Psoas muscle (tissue), 8 donors: ENCODE measurements at regions of chr3 and their contacts with region 1.

Region 1: GRCh38 chr3:12868039-12869034 is 27.0 kb upstream of the RPL32 start:
- DNase-seq: peak; percentile 85 to 92
- ATAC-seq: peak; percentile 86 to 87 (median 86)
- H3K4me3 ChIP-seq: no peak overlapping the region
- H3K27ac ChIP-seq: no peak overlapping the region
- H3K4me1 ChIP-seq: no peaks in the 10 kb centered on the region
- H3K27me3 ChIP-seq: no peaks in the 10 kb centered on the region
- CTCF ChIP-seq: peak; percentile 72

Region 2: GRCh38 chr3:12508291-12508700 is 360.0 kb before region 1 on chr3:
- intact Hi-C with region 1: no loop called
- DNase-seq: peak in 1 of 2 donors; percentile 21
- ATAC-seq: peak; percentile 30 to 93 (median 82)
- H3K4me3 ChIP-seq: no peak overlapping the region
- H3K27ac ChIP-seq: peak overlapping the region; percentile 38
- H3K4me1 ChIP-seq: peaks cover 10% of the 10 kb centered on the region
- H3K27me3 ChIP-seq: no peaks in the 10 kb centered on the region
- CTCF ChIP-seq: no peak

Region 3: GRCh38 chr3:12841149-12841970 is 27.0 kb before region 1 on chr3 and contains the start of gene RPL32:
- intact Hi-C with region 1: no loop called
- DNase-seq: peak; percentile 88 to 93
- ATAC-seq: peak; percentile 91 to 94 (median 92)
- H3K4me3 ChIP-seq: peak within 1 kb of the TSS; percentile 98
- H3K27ac ChIP-seq: peak within 1 kb of the TSS; percentile 85
- H3K4me1 ChIP-seq: peaks cover 42% of the 10 kb centered on the region
- H3K27me3 ChIP-seq: no peaks in the 10 kb centered on the region
- CTCF ChIP-seq: peak; percentile 79
- total RNA-seq, gene RPL32: 1,418 to 1,919 (median 1,477) TPM

Region 4: GRCh38 chr3:12886106-12886679 is 17.9 kb after region 1 on chr3:
- intact Hi-C with region 1: loop called in 1 of 2 experiments (anchors 2 kb)
- DNase-seq: peak in 1 of 2 donors; percentile 2
- ATAC-seq: peak in 3 of 4 donors; percentile 11 to 28 (median 21)
- H3K4me3 ChIP-seq: peak overlapping the region; percentile 48
- H3K27ac ChIP-seq: peak overlapping the region; percentile 44
- H3K4me1 ChIP-seq: peaks cover 33% of the 10 kb centered on the region
- H3K27me3 ChIP-seq: no peaks in the 10 kb centered on the region
- CTCF ChIP-seq: no peak

Region 5: DNA sequence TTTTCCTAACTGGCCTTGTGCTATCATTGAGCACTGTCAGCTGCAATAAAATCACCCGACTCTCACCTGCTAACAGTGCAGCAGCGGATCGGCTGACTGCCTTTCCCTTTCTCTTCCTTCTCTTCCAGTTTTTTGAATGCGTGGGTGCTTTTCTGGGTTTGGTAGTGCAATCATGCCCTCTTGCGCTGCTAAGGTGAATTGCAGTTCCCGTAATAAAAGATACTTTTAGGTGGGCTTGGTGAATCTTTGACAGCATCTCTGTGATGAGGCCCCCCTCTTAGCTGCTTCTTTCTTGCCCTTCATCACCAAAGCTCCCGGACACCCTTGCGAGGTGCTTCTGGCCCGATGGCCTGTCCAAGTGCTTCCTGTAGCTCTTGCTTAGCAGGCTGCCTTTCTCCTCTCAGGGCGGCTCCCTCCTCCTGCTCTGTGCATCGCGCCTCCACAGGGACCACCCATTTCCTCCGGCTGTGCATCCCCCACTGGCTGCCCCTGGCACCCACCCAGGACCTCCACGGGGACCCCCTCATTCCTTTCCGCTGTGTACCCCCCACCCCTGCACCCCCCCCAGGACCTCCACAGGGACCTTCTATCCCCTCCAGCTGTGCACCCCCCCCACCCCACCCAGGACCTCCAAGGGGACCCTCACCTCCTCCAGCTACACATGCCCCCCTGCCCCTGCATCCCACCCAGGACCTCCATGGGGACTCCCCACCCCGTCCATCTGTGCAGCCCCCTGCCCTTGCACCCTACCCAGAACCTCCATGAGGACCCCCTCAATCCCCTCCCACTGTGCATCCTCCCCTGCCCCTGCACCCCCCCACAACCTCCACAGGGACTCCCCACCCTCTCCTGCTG is 23.9 kb after region 1 on chr3:
- intact Hi-C with region 1: loop called (anchors 2 kb)
- DNase-seq: peak; percentile 18 to 54
- ATAC-seq: peak; percentile 39 to 73 (median 62)
- H3K4me3 ChIP-seq: peak overlapping the region; percentile 26
- H3K27ac ChIP-seq: peak overlapping the region; percentile 10
- H3K4me1 ChIP-seq: peaks cover 18% of the 10 kb centered on the region
- H3K27me3 ChIP-seq: no peaks in the 10 kb centered on the region
- CTCF ChIP-seq: peak; percentile 86

Region 6: DNA sequence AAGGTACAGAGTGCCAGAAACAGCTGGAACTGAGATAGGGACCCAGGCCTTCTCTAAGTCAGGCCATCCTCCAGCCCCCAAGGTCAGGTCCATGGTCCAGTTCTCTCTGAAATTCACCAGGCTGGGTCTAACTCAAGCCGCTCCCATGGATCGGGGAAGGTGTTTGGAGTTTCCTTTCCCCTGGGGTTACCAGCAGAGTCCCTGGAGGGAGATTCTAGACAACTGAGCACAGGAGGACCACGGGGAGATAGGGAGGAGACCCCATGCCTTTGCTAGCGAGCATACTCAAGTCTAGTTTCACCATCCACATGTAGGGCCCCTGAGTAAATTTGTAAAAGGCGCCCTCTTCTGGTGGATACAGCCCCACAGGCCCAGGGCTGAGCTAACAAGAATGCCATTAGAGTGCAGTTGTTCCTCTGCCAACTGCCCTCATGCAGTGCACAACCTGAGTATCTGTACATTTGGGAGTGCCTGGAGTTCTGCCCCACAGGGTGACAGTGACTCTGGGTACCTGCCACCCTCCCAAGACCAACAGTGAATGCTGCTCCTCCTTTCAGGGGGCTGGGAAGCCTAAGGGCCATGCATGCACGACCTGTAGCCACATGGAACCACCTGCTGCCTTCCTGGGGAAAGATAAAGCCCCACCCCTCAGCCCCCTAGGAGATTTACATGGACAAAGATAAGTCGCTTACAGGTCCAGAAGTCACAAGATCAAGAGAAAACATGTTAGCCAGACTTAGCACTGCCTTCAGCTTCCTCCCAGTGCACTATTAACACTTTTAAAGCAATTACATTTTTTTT is 115.9 kb after region 1 on chr3:
- intact Hi-C with region 1: loop called (anchors 2 to 5 kb)
- DNase-seq: peak; percentile 70 to 78
- ATAC-seq: peak; percentile 84 to 92 (median 86)
- H3K4me3 ChIP-seq: no peak overlapping the region
- H3K27ac ChIP-seq: peak overlapping the region; percentile 36
- H3K4me1 ChIP-seq: peaks cover 31% of the 10 kb centered on the region
- H3K27me3 ChIP-seq: no peaks in the 10 kb centered on the region
- CTCF ChIP-seq: peak; percentile 80

Region 7: DNA sequence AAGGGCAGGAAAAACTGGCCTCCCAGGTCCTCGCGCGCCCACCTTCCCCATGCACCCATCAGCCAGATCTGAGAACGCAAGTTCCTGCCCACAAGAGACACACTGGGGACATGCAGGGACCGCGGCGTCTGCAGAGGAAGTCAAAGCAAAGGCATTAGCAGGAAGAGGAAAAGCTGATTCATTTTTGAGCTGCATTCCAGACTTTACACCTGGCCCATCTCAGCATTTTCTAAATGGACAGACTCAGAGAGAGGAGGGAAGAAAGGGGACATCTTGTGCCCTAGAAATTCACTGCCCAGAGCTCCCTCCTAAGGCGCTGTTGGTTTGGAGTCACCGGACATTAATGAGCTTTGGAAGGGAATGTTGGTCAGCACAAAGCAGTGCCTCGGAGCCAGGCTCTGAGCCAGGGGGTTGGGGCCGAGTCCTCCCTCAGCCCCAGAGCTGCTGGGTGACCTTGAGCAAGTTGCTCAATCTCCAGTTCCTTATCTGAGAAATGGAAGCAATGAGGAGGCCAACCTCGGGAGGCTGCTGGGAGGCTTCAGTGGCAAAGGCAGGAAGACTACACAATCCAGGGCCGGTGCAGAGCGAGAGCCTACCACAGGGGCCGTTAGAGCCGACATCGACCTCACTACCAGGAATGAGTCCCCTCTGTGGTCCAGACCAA is 355.4 kb after region 1 on chr3:
- intact Hi-C with region 1: no loop called
- DNase-seq: no peak
- ATAC-seq: no peak
- H3K4me3 ChIP-seq: no peak overlapping the region
- H3K27ac ChIP-seq: no peak overlapping the region
- H3K4me1 ChIP-seq: no peaks in the 10 kb centered on the region
- H3K27me3 ChIP-seq: no peaks in the 10 kb centered on the region
- CTCF ChIP-seq: no peak

Region 8: DNA sequence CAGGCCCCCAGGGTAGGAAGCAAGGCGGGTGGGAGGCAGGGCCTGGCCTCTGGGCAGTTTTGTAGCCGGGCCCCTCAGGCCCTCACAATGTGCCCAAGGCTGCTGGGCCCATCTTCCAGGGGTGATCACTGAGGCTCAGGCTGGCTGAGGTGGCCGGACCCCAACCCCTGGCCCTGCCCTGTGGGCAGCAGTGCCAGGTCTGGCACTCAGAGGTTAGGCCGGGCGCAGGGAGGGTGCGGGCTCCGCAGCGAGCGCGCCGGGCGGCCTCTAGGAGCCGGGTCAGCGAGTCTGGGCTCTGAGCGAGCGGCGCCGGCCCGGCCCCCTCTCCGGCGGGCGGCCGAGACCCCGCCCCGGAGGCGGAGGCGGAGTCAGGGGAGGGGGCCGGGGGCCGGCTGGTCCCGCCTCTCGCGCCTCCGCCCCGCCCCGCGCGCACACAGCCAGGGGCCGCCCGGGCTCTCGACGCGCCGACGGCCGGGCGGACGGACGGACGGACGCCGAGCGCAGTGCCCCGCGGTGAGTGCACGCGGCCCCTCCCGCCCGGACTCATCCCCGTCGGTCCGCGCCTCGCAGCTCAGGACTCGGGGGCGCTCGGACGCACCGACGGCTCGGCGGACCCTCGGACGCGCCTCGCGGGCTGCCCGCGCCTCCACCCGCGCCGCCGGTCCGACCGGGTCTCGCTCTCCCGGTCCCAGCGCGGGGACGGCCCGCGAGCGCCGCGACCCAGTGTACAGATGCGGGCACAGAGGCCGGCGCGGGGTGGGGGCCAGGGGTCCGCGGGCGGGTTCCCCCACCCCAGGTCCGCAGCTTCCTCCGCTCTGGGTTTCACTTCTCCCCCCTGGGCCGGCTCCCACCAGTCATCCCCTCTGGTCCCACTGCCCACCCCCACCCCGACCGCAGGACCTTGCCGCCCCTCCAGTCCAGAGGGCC is 680.6 kb after region 1 on chr3 and contains the start of gene FBLN2:
- intact Hi-C with region 1: no loop called
- DNase-seq: peak; percentile 66 to 84
- ATAC-seq: peak; percentile 61 to 73 (median 70)
- H3K4me3 ChIP-seq: peak within 1 kb of the TSS; percentile 55
- H3K27ac ChIP-seq: no peak within 1 kb of the TSS
- H3K4me1 ChIP-seq: no peaks in the 10 kb centered on the region
- H3K27me3 ChIP-seq: peaks cover 0 to 36% (median 7%) of the 10 kb centered on the region in 3 donors
- CTCF ChIP-seq: no peak
- total RNA-seq, gene FBLN2: 24.9 to 59.4 (median 29.7) TPM